ENCODE measurements at regions of chr3 and their contacts with region 1.

Region 1: DNA sequence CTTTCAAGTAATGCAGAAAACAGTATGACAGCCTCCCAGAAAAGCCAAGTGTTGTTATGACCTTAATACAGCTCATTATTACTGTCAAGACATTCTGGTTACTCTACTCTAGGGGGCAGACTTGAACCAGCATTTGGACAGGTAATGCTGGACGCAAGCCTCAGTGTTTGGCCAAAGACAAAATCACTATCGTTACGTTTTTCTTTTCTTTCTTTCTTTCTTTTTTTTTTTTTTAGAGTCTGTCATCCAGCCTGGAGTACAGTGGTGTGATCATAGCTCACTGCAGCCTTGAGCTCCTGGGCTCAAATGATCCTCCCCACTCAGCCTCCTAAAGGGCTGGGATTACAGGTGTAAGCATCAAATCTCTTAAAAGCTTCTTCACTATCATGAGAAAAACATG is 29.4 kb upstream of the TMEM45A start:
- DNase-seq: peak; percentile 30
- H3K4me3 Mint-ChIP-seq: no peak overlapping the region
- H3K27ac Mint-ChIP-seq: no peak overlapping the region
- H3K4me1 Mint-ChIP-seq: peaks cover 12% of the 10 kb centered on the region
- H3K27me3 Mint-ChIP-seq: no peaks in the 10 kb centered on the region

Region 2: DNA sequence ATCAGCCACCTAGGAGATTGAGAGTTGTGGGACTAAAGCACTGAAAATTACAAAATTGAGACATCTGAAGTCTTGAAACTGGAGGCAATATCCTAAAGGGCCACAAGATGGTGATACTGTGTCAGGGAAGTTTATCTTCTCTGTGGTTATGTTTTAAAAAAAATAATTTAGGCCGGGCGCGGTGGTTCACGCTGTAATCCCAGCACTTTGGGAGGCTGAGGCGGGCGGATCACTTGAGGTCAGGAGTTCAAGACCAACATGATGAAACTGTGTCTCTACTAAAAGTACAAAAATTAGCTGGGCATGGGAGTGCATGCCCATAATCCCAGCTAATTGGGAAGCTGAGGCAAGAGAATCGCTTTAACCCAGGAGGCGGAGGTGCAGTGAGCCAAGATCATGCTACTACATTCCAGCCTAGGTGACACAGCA is 146.3 kb before region 1 on chr3:
- CTCF ChIA-PET with region 1: interaction called, 11 read pairs
- DNase-seq: peak; percentile 55
- H3K4me3 Mint-ChIP-seq: no peak overlapping the region
- H3K27ac Mint-ChIP-seq: peak overlapping the region; percentile 38
- H3K4me1 Mint-ChIP-seq: peaks cover 19% of the 10 kb centered on the region
- H3K27me3 Mint-ChIP-seq: no peaks in the 10 kb centered on the region

Region 3: DNA sequence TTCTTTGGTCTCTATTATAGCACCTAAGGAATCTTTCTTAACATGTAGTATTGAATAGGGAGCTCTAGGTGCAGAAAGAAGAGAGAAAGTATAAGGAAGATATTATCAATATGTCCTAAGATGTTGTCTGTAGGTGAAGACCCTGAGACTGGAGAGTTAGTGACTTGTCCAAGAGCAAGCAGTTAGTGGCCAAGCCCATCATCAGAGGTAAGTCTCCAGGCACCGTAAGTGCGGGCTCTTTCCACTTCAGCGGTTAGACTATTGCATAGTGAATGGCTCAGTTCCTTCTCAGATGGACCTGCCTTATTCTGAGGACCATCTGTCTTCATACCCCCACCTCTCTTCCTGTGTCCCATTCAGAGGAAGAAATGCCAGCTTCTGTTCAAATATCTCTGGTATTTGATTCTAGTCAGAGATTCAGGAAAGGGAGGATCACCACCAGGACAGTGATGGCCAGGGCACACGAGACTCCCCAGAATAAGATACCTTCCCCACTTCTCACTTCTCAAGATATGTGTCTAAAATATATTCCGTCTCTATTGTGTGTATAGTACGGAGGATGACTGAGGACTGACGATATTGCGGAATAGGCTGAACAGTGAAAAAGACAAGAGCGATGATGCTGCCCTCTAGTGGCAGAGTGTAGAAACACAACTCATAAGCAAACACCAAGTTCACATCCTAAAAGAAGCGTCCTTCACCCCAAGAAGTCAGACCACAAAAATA is 127.3 kb after region 1 on chr3:
- CTCF ChIA-PET with region 1: interaction called, 56 read pairs
- DNase-seq: peak; percentile 73
- H3K4me3 Mint-ChIP-seq: no peak overlapping the region
- H3K27ac Mint-ChIP-seq: no peak overlapping the region
- H3K4me1 Mint-ChIP-seq: peaks cover 3% of the 10 kb centered on the region
- H3K27me3 Mint-ChIP-seq: no peaks in the 10 kb centered on the region

Region 4: DNA sequence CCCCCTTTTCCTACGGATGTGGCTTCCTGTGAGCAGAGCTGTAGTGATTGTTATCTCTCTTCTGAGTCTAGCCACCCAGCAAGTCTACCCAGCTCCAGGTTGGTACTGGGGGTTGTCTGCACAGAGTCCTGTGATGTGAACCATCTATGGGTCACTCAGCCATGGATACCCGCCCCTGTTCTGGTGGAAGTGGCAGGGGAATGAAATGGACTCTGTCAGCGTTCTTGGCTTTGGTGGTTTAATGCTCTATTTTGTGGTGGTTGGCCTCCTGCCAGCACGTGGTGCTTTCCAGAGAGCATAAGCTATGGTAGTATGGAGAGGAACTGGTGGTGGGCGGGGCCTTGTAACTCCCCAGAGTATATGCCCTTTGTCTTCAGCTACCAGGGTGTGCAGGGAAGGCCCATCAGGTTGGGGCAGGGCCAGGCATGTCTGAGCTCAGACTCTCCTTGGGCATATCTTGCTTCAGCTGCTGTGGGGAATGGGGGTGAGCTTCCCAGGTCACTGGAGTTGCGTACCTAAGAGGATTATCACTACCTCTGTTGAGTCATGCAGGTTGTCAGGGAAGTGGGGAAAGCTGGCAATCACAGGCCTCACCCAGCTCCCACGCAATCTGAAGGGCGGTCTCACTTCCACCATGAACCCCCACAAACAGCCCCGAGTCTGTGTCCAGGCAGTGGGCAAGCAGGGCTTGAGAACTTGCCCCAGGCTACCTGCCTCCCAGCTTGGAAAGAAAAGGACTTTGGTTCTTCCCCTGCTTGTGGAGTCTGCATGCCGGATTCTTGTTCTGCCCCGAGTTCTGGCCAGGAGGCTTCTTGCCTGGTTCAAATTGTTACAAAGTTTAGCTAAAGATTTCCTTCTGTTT is 137.4 kb after region 1 on chr3:
- CTCF ChIA-PET with region 1: interaction called, 10 read pairs
- DNase-seq: peak; percentile 26
- H3K4me3 Mint-ChIP-seq: no peak overlapping the region
- H3K27ac Mint-ChIP-seq: peak overlapping the region; percentile 26
- H3K4me1 Mint-ChIP-seq: peaks cover 44% of the 10 kb centered on the region
- H3K27me3 Mint-ChIP-seq: peaks cover 18% of the 10 kb centered on the region

Region 5: DNA sequence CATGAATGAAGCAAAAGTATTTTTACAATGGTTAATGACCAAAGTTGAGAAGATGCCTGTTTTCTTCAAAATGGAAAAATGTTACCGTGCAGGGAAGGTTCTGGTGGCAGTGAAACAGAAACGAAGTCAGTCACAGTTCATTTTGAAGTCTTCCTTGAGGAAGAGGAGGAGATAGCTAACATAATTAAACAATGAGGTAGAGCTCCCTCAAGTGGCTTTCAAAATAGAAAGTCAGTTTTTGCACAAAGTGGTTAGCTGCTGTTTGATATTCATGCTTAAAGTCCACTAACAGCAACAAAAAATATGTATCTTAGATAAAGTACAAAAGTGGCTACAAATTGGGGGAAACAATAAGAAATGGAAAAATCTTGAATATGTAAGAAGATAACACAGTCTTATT is 333.6 kb after region 1 on chr3:
- CTCF ChIA-PET with region 1: interaction called, 16 read pairs
- DNase-seq: no peak
- H3K4me3 Mint-ChIP-seq: no peak overlapping the region
- H3K27ac Mint-ChIP-seq: no peak overlapping the region
- H3K4me1 Mint-ChIP-seq: peaks cover 5% of the 10 kb centered on the region
- H3K27me3 Mint-ChIP-seq: no peaks in the 10 kb centered on the region

Measured in activated naive CD4-positive, alpha-beta T cell treated with anti-CD3 and anti-CD28 coated beads, Interleukin-2, amount 10 ng/mL, durations not matched to agents 7 days and 5 days (primary cell).